IMR-90 (cell line): ENCODE measurements at regions of chr1 and their contacts with region 1.

Region 1: DNA sequence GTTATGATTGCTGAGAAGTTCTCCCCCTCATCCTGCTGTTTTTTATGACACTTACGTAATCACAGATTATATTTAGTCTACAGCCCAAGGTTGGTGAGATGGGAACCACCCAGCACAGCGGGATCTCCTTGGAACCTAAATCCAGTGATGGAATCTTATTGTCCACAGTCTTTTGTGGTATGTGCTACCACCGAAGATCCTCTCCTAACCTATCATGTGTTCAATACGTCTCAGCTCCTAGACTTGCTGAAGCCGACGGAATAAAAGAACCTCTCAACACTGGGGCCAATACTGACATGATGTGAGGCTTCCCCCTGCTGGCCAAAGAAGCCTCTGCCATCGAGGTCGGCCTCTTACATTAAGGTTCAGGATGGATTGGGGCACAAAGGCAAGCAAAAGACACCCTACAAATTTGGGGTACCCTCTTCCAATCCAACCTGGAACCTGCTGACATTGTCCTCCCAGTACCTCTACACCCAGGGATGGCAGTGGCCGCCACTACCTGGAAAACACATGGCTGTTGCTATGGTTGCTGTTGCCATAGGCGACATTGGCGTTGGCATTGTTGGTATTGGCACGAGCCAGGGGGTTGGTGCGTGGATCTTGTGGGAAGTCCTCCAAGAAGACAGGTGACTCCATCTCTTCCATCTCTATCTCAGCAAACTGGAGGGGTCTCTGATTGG is 19.4 kb upstream of the KIF21B start:
- DNase-seq: peak; percentile 70
- ATAC-seq: peak; percentile 97
- H3K4me3 ChIP-seq: no peak overlapping the region
- H3K27ac ChIP-seq: no peak overlapping the region
- H3K4me1 ChIP-seq: no peaks in the 10 kb centered on the region
- H3K27me3 ChIP-seq: peaks cover 24% of the 10 kb centered on the region
- CTCF ChIP-seq: peak; percentile 79
- POLR2A ChIP-seq: no peak
- RAD21 ChIP-seq: peak; percentile 81

Region 2: GRCh38 chr1:200558866-200559459 is 484.0 kb before region 1 on chr1:
- CTCF ChIA-PET with region 1: interaction called, 4 read pairs
- POLR2A ChIA-PET with region 1: no interaction called
- dilution Hi-C with region 1: no loop called
- in situ Hi-C with region 1: loop called (anchors 5 kb)
- intact Hi-C with region 1: loop called (anchors 1 kb)
- DNase-seq: peak; percentile 77
- ATAC-seq: peak; percentile 94
- H3K4me3 ChIP-seq: no peak overlapping the region
- H3K27ac ChIP-seq: no peak overlapping the region
- H3K4me1 ChIP-seq: no peaks in the 10 kb centered on the region
- H3K27me3 ChIP-seq: no peaks in the 10 kb centered on the region
- CTCF ChIP-seq: peak; percentile 74
- POLR2A ChIP-seq: no peak
- RAD21 ChIP-seq: peak; percentile 74

Region 3: DNA sequence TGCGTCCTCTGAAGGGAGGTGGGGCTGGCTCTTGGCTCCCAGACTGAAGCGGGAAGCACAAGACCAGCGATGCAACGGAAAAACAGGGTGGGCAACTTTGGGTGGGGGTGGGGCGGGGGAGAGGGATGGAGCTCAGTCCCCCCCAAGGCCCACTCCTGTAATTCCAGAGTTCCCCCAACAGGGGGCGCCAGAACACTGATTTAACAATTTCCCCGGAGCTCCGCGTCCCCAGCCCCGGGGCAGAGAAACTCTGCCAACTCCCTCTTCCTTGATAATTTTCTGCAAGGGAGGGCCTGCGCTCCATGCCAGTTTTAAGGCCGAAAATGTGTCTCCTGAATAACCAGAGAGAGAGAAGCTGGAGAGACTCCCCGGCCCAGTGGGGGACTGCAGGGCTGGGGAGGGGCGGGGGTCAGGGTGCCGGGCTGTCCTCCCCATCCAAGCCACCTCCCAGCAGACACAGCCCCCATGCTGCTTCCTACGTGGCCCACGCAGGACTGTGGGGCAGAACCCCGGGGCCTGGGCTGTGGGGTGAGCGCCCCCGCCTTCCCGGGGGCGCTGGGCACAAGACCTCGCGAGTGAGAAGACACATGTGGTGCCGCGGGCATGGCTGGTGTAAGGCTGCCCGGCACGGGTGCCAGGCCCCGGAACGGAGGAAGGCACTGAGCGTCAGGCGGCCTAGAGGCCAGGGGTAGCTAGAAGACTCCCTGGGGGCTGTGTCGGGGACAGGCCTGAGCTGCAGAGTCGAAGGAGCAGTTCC is 70.8 kb before region 1 on chr1:
- CTCF ChIA-PET with region 1: interaction called, 5 read pairs
- POLR2A ChIA-PET with region 1: no interaction called
- dilution Hi-C with region 1: no loop called
- in situ Hi-C with region 1: loop called (anchors 5 kb)
- intact Hi-C with region 1: loop called (anchors 1 kb)
- DNase-seq: peak; percentile 38
- ATAC-seq: peak; percentile 77
- H3K4me3 ChIP-seq: no peak overlapping the region
- H3K27ac ChIP-seq: no peak overlapping the region
- H3K4me1 ChIP-seq: no peaks in the 10 kb centered on the region
- H3K27me3 ChIP-seq: peaks cover 5% of the 10 kb centered on the region; the same call in 1 of the 2 replicates
- CTCF ChIP-seq: peak; percentile 71
- POLR2A ChIP-seq: no peak
- RAD21 ChIP-seq: peak; percentile 71

Region 4: DNA sequence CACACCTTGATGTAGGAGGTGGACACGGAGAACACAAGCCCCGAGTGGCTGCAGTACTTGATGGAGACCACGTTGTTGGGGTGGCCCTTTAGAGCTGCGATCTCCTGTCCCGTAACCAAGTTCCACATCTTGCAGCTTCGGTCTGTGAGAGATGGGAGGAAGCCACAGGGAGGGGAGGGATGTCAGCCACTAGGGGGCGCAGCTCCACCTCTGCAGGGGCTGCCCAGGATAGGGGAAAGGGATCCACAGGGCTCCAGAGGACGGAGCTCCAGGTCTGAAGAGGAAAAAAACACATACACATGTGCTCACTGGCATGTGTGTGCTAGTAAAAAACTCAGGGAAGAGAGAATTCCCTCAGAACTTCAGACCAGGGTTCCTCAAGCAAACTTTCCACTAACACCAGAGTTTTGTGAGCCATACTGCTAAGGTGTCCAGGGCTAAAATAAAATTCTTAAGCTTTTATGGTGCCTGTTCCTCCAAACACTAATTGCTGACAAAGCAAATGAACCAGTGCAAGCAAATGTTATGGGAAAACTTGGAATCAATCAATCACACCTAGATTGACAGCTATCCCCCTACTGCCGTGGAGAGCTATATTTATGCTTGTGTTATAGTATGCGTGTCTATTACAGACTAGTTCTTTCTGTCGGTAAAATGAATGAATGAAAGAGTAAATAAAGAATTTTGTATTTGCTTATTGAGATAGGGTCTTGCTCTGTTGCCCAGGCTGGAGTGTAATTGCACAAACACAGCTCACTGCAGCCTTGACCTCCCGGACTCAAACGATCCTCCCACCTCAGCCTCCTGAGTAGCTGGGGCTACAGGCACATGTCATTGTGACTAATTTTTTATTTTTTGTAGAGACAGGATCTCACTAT is 63.1 kb before region 1 on chr1:
- CTCF ChIA-PET with region 1: interaction called, 3 read pairs
- POLR2A ChIA-PET with region 1: no interaction called
- dilution Hi-C with region 1: no loop called
- in situ Hi-C with region 1: loop called (anchors 5 kb)
- intact Hi-C with region 1: no loop called
- DNase-seq: no peak
- ATAC-seq: no peak
- H3K4me3 ChIP-seq: no peak overlapping the region
- H3K27ac ChIP-seq: no peak overlapping the region
- H3K4me1 ChIP-seq: peaks cover 2% of the 10 kb centered on the region; the same call in 1 of the 2 replicates
- H3K27me3 ChIP-seq: no peaks in the 10 kb centered on the region; the same call in 1 of the 2 replicates
- CTCF ChIP-seq: peak; percentile 27; the same call in 1 of the 2 replicates
- POLR2A ChIP-seq: no peak
- RAD21 ChIP-seq: peak; percentile 24